ENCODE measurements at regions of chr17 and their contacts with region 1.

Region 1: GRCh38 chr17:49677933-49678847 is at the start of gene SPOP:
- DNase-seq: peak; percentile 98

Region 2: GRCh38 chr17:49646391-49647255 is 31.6 kb before region 1 on chr17:
- CTCF ChIA-PET with region 1: no interaction called
- POLR2A ChIA-PET with region 1: interaction called, 15 read pairs
- DNase-seq: no peak